Vagina (tissue), 2 donors: ENCODE measurements at regions of chr2 and their contacts with region 1.

Region 1: GRCh38 chr2:107681936-107682335 is 144.8 kb upstream of the RGPD4 start:
- DNase-seq: no peak
- H3K4me3 ChIP-seq: no peak overlapping the region
- H3K27ac ChIP-seq: no peak overlapping the region
- H3K4me1 ChIP-seq: no peaks in the 10 kb centered on the region
- H3K27me3 ChIP-seq: no peaks in the 10 kb centered on the region
- CTCF ChIP-seq: no peak
- POLR2A ChIP-seq: no peak

Region 2: DNA sequence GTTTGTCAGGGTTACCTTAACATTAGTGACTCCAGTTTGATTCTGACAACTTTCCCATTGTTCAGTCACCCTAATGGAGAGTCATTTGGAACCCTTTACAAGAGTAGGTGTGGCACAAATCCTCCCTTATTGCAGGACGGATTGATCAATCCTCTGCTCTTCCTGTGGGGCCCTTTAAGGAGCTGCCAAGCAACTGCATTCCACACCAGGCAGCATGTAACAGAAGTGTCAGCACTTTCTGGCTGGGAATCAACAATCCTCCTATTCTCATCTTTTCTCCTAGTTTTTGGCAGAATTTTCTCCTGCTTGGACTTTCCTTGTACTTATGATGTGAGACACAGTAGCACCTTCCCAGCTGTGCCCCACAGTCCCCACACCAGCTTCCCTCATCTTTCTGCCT is 973.7 kb before region 1 on chr2:
- intact Hi-C with region 1: loop called (anchors 5 kb)
- DNase-seq: no peak
- H3K4me3 ChIP-seq: no peak overlapping the region
- H3K27ac ChIP-seq: no peak overlapping the region
- H3K4me1 ChIP-seq: peaks cover 14% of the 10 kb centered on the region
- H3K27me3 ChIP-seq: no peaks in the 10 kb centered on the region
- CTCF ChIP-seq: no peak
- POLR2A ChIP-seq: no peak

Region 3: GRCh38 chr2:107801498-107801897 is 119.6 kb after region 1 on chr2:
- intact Hi-C with region 1: no loop called
- DNase-seq: no peak
- H3K4me3 ChIP-seq: no peak overlapping the region
- H3K27ac ChIP-seq: no peak overlapping the region
- H3K4me1 ChIP-seq: no peaks in the 10 kb centered on the region
- H3K27me3 ChIP-seq: no peaks in the 10 kb centered on the region
- CTCF ChIP-seq: no peak
- POLR2A ChIP-seq: no peak